H1 (cell line): ENCODE measurements at regions of chr11 and their contacts with region 1.

Region 1: DNA sequence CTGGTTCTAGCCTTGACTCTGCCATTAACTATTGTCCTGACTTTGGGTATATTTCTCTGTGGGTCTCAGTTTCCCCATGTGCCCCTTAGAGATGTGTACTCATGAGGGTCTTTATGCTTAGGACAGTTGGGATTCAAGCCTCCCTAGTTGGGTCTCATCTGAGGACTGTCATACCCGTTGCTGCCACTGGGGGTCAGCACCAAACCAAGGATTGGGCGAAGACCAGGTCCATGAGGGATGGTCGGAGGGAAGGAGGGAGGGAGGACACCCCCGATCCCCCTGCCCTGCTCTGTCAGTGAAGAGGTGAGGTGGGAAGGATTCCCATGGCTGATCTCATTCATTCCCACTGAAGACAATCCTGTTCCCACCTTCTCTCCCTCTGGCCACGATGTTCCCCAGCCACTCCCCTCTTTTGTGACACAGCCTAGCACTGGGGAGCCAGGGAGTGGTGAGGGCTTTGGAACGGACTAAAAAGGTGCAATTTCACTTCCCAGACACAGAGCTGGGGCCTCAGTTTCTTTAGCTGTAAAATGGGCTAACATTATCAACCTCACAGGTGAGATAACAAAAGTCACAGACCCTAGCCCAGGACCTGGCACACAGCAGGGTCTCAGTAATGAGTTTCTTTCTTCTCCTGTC is 12.4 kb upstream of the KLHL35 start:
- DNase-seq: peak in 1 of 2 experiments; percentile 95
- H3K4me3 ChIP-seq: no peak overlapping the region
- H3K27ac ChIP-seq: no peak overlapping the region
- H3K4me1 ChIP-seq: no peaks in the 10 kb centered on the region
- H3K27me3 ChIP-seq: no peaks in the 10 kb centered on the region
- CTCF ChIP-seq: peak; percentile 94 to 98 (median 94)
- EP300 ChIP-seq: no peak
- POLR2A ChIP-seq: no peak
- RAD21 ChIP-seq: peak; percentile 99 to 100

Region 2: DNA sequence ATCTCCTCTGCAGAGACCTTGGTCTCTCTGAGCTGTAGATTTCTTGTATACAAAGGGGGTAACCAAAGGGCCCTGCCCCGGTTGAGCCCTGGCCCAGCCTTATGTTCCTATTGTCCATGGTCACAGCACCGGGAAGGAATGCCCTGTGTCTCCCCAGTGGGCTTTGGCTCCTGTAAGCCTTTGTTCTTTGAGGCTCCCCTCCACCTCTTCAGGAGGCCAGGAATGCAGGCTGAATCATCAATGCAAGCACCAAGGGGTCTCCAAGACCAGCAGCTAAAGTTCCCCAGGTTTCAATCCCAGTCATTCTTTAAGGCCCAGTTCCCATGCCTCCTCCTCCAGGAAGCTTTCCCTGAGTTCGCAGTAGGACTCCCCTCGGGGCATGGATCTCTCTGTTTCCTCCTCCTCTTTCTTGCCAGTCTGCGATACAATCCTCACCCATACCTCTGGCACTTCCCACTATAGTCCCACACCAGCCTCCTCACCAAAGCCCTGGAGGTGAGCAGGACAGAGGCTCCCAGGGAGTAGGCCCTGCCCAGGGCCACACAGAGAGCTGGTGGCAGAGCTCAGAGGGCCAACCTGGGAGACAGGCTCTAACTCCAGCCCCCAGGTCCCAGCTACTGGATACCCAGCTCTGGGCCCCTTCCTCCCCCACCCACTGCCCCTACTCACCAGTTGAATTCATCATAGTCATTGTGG is 16.8 kb after region 1 on chr11:
- CTCF ChIA-PET with region 1: interaction called, 155 read pairs
- POLR2A ChIA-PET with region 1: interaction called, 5 read pairs
- DNase-seq: peak in 1 of 2 experiments; percentile 44
- H3K4me3 ChIP-seq: no peak overlapping the region
- H3K27ac ChIP-seq: 0 out of 2 replicates have a peak overlapping the region, but pooled peaks have one; percentile 43
- H3K4me1 ChIP-seq: peaks cover 8 to 19% (median 14%) of the 10 kb centered on the region in 4 experiments
- H3K27me3 ChIP-seq: no peaks in the 10 kb centered on the region
- CTCF ChIP-seq: no peak
- EP300 ChIP-seq: no peak
- POLR2A ChIP-seq: no peak
- RAD21 ChIP-seq: no peak

Region 3: DNA sequence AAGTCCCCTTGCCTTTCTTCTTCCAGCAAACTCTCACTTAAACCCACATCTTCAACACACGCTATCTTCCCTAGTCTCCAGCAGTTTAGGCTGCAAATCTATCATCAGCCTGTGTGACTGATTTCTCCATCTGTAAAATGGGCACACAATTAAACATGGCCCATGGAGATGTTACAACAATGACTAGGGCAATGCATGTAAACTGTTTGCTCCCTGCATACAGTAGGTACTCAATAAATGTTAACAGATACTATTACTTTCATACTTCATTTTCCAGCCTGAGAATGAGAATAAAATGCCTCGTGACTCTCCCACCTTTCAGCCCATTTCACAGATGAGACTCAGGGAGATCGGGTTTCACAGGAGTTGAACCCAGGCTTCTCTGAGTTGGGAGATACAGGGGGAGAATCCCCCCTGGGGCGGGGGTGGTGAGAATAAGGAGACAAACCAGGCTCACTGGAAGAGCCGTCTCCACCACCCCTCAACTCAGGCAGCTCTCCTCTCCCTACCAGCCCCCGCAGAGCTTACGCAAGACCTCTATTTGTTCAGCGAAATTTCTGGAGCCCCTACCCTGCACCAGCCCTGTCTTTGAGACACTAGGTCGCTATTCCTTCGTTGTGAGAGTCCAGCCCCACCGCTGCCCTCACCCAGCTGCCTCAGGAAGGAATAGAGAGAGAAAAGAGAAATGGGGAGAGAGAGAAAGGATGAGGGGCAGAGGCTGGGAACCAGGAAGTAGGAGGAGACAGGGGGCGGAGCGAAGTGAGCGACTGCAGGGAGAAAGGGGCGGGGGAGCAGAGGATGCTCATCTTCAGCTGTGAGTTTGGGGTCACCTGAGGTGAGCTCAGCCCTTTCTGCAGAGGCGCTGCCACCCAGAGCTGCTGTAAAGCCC is 29.7 kb after region 1 on chr11:
- CTCF ChIA-PET with region 1: interaction called, 155 read pairs
- POLR2A ChIA-PET with region 1: no interaction called
- DNase-seq: peak; percentile 38 to 86
- H3K4me3 ChIP-seq: peak overlapping the region in 2 of 4 experiments; percentile 17 to 55; a peak in 5 of 8 replicates
- H3K27ac ChIP-seq: no peak overlapping the region; the same call in 1 of the 2 replicates
- H3K4me1 ChIP-seq: peaks cover 3 to 8% (median 4%) of the 10 kb centered on the region in 4 experiments; a peak in 5 of 7 replicates
- H3K27me3 ChIP-seq: no peaks in the 10 kb centered on the region
- CTCF ChIP-seq: no peak
- EP300 ChIP-seq: no peak
- POLR2A ChIP-seq: peak in 1 of 2 experiments; percentile 47; a peak in 1 of 3 replicates
- RAD21 ChIP-seq: no peak

Region 4: GRCh38 chr11:75520688-75521087 is 75.3 kb after region 1 on chr11:
- CTCF ChIA-PET with region 1: interaction called, 603 read pairs
- POLR2A ChIA-PET with region 1: interaction called, 3 read pairs
- DNase-seq: no peak
- H3K4me3 ChIP-seq: no peak overlapping the region
- H3K27ac ChIP-seq: no peak overlapping the region
- H3K4me1 ChIP-seq: peaks cover 0 to 9% (median 1%) of the 10 kb centered on the region in 4 experiments; a peak in 2 of 7 replicates
- H3K27me3 ChIP-seq: peaks cover 14 to 31% (median 19%) of the 10 kb centered on the region in 4 experiments; a peak in 6 of 7 replicates
- CTCF ChIP-seq: no peak
- EP300 ChIP-seq: no peak
- POLR2A ChIP-seq: no peak
- RAD21 ChIP-seq: no peak

Region 5: DNA sequence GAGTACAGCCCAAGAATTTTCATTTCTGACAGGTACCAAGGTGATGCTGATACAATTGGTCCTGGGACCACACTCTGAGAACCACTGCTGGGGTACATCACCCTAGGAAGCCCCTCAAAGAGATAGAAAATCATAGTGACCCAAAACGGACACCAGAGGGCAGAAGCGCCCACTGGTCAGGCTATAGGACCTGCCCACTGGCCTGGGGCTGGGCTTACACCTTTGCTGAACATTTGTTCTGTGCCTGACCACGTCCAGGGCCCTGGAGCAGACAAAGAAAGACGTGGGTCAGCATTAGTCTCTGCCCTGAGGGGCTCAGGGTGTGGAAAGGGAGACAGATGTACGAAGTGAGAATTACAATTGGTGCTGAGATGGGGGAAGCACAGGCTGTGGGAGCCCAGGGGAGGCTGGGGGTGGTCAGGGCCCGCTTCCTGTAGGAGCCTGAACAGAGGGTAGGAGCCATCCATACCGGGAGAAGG is 102.2 kb after region 1 on chr11:
- CTCF ChIA-PET with region 1: interaction called, 14 read pairs
- POLR2A ChIA-PET with region 1: no interaction called
- DNase-seq: peak in 1 of 2 experiments; percentile 91
- H3K4me3 ChIP-seq: no peak overlapping the region
- H3K27ac ChIP-seq: no peak overlapping the region
- H3K4me1 ChIP-seq: peaks cover 0 to 4% (median 2%) of the 10 kb centered on the region in 4 experiments; a peak in 5 of 7 replicates
- H3K27me3 ChIP-seq: no peaks in the 10 kb centered on the region; a peak in 1 of 7 replicates
- CTCF ChIP-seq: peak; percentile 72 to 89 (median 82)
- EP300 ChIP-seq: no peak
- POLR2A ChIP-seq: peak in 1 of 2 experiments; percentile 19; a peak in 1 of 3 replicates
- RAD21 ChIP-seq: peak; percentile 89 to 92

Region 6: DNA sequence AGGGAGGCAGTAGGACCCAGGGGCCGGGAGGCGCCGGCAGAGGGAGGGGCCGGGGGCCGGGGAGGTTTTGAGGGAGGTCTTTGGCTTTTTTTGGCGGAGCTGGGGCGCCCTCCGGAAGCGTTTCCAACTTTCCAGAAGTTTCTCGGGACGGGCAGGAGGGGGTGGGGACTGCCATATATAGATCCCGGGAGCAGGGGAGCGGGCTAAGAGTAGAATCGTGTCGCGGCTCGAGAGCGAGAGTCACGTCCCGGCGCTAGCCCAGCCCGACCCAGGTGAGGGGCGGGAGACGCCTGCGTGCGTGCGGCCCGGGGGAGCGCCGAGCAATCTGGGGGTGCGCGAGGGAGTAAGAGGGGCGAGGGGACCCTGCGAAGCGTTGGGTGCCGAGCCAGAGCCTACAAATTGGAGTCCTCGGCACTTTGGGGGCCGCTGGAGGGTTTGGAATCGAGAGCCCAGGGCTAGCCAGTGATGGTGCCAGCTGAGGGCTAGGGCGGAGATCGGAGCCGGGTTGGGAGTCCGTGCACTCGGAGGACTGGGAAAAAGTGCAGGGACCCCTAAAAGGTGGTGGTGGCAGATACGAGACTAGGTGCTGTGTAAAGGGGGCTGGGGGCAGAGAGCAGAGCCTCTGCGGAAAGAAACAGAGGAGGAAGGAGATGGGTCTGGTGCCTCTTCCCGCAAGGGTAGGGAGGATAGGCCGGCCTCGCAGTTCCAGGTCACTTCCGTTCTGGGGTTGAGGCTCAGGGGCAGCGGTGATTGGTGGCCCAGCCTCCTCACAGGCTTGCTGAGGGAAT is 116.8 kb after region 1 on chr11 and contains the start of gene SERPINH1:
- CTCF ChIA-PET with region 1: interaction called, 11 read pairs
- POLR2A ChIA-PET with region 1: interaction called, 4 read pairs
- DNase-seq: peak in 1 of 2 experiments; percentile 83
- H3K4me3 ChIP-seq: peak within 1 kb of the TSS; percentile 62 to 93 (median 84)
- H3K27ac ChIP-seq: peak within 1 kb of the TSS; percentile 95
- H3K4me1 ChIP-seq: peaks cover 10 to 57% (median 39%) of the 10 kb centered on the region in 4 experiments
- H3K27me3 ChIP-seq: no peaks in the 10 kb centered on the region
- CTCF ChIP-seq: no peak
- EP300 ChIP-seq: no peak
- POLR2A ChIP-seq: peak; percentile 77 to 86; a peak in 2 of 3 replicates
- RAD21 ChIP-seq: no peak; a peak in 1 of 4 replicates
- total RNA-seq, gene SERPINH1: 420 and 424 TPM in 2 replicates